OCI-LY7 (cell line): ENCODE measurements at regions of chr16 and their contacts with region 1.

Region 1: DNA sequence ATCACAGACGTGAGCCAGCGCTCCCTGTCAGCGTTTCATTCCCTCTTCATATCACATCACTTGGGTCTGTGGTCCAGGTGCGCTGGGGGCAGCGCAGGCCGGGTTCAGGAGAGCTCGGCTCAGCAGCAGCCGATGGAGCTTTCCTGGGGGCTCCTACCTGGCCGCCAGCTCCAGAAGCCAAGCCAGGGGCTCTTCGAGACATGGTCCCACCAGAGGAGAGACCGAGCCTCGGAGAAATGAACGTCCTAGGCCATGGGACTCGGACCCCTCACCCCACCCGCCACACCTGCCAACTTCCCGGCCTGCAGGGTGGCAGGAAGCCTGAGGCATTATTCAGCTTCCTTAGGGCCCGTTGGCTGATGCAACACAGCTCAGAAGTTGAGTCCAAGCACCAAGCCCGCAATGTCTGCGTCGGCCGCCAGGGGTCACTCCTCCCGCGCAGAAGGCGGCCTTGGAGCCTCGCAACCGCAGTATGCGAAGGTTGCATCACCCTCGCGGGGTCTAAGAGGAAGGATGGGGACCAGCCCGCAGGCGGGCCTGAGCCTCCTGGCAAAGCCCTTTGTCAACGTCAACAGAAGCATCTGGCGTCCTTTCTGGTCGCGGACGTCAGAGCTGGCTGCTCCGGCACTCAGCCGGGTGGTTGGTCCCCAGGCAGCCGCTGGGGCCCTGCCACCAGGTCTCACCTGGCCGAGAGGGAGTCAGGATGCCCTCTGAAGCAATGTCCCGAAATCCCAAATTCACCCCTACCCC is 13.2 kb upstream of the KLHDC4 start:
- DNase-seq: peak; percentile 100
- H3K4me3 ChIP-seq: peak overlapping the region; percentile 71
- H3K27ac ChIP-seq: peak overlapping the region; percentile 98
- H3K4me1 ChIP-seq: peaks cover 88% of the 10 kb centered on the region
- CTCF ChIP-seq: peak; percentile 81

Region 2: GRCh38 chr16:87790278-87791032 is 11.4 kb after region 1 on chr16:
- CTCF ChIA-PET with region 1: interaction called, 3 read pairs
- POLR2A ChIA-PET with region 1: interaction called, 16 read pairs
- intact Hi-C with region 1: no loop called
- DNase-seq: no peak
- H3K4me3 ChIP-seq: no peak overlapping the region
- H3K27ac ChIP-seq: no peak overlapping the region
- H3K4me1 ChIP-seq: no peaks in the 10 kb centered on the region
- CTCF ChIP-seq: no peak

Region 3: GRCh38 chr16:87842209-87842869 is 63.3 kb after region 1 on chr16:
- CTCF ChIA-PET with region 1: interaction called, 3 read pairs
- POLR2A ChIA-PET with region 1: interaction called, 5 read pairs
- intact Hi-C with region 1: loop called (anchors 2 kb)
- DNase-seq: peak; percentile 77
- H3K4me3 ChIP-seq: peak overlapping the region; percentile 27
- H3K27ac ChIP-seq: peak overlapping the region; percentile 61
- H3K4me1 ChIP-seq: peaks cover 40% of the 10 kb centered on the region
- CTCF ChIP-seq: no peak

Region 4: DNA sequence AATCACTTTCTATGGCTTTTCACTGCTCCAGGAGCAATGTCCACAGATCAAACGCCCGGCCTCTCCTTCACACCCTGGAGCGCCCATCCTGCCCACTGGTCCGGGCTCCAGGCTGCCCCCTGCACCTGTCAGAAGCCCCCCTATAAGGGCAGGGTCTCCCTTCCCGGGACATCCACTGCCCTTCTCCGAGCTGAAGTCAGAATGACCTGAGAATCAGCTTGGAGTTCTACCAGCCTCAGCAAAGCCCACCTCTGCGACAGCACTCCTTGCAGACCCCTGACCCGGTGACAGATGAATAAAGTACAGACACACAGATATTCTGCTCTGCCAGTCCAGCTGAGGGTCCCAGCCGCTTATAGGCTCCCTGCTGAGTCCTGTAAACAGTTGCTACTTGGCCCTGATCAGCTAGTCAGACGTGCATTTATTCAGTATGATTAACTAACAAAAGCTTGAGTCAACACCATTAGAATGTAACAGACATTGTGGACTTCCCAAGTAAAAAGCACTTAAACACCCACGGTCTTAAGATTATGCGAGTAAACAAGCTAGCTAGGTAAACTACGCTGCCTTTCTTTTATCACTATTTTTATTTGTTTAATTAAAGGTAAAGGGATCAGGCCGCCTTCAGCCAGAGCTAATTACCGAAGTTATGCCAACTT is 85.5 kb after region 1 on chr16:
- CTCF ChIA-PET with region 1: interaction called, 41 read pairs
- POLR2A ChIA-PET with region 1: interaction called, 51 read pairs
- intact Hi-C with region 1: no loop called
- DNase-seq: no peak
- H3K4me3 ChIP-seq: peak overlapping the region; percentile 99
- H3K27ac ChIP-seq: peak overlapping the region; percentile 5
- H3K4me1 ChIP-seq: peaks cover 56% of the 10 kb centered on the region
- CTCF ChIP-seq: no peak

Region 5: DNA sequence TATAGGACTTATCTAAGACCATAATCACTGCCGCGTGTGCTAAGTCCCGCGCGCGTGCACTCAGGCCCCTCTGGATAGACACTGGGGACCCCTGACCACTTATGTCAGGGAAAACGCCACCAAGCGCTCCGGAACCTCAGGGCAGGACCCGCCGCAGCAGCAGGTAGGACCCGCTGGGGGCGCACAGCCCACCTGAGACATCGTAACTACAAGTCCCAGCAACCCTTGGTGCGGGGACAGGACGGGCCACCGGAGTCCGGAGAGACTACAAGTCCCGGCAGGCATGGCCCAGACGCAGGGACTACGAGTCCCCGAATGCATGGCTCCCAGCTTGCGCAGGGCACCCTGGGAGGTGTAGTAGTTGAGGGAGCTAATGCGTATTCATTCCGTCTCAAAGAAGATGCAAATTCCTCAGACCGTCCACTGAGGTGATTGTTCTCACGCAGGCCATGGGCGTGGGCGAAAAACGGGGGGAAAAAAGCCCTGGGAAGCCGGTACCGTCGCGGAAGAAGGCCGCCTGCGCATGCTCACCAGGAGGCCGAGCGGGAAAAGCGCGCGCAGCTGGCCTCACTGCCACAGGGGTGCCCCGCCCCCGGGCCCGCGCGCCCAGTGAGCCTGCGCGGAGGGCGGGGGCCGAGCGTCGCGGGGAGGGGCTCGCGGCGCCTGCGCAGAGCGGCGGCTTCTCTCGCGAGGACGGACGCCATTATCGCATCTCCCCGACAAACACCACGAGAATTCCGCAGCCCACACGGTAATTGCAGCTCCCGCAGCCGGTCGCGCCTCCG is 172.0 kb after region 1 on chr16 and contains the start of gene BANP:
- CTCF ChIA-PET with region 1: no interaction called
- POLR2A ChIA-PET with region 1: no interaction called
- intact Hi-C with region 1: loop called (anchors 2 kb)
- DNase-seq: peak; percentile 100
- H3K4me3 ChIP-seq: peak within 1 kb of the TSS; percentile 74
- H3K27ac ChIP-seq: peak within 1 kb of the TSS; percentile 76
- H3K4me1 ChIP-seq: peaks cover 53% of the 10 kb centered on the region
- CTCF ChIP-seq: peak; percentile 65
- total RNA-seq, gene BANP: 37.1 and 39.6 TPM in 2 replicates